Ascending aorta (tissue), 2 donors: ENCODE measurements at regions of chr19 and their contacts with region 1.

Region 1: DNA sequence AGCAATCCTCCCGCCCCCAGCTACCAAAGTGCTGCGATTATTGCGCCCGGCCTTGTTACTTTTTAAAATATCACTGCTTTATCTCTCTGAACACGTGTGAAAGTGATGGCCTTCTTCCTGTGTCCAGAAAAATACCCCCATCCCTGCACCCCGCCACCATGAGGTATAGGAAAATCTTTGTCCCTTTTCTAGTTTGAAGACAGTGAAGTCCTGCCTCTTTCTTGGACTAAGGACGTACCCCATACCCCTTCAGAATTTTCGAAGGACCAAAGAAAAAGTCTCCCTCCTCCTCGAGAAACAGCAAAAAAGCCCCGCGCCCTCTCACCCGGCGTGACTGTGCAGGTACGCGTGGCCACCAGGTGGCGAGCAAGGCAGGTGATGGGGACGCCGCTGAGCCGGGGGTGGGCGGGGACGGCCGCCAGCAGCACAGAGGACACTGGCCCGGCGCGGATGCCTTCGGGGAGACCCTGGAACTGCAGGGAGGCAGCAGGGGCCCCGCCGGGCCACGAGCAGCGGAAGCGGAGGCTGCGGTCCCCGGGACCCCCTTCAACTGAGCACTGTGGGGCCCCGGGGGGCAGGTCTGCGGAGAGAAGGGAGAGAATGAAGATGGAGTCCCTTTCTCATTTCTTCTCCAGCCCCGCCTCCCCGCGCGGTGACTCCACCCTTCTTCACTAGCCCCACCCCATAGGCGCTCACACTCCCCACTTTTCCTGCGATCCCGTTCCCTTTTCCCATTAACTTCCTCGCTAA is 3.2 kb downstream of the VSIG10L start:
- DNase-seq: peak; percentile 47 to 92
- H3K4me3 ChIP-seq: peak overlapping the region; percentile 57 to 85
- H3K27ac ChIP-seq: peak overlapping the region; percentile 92 to 93
- H3K4me1 ChIP-seq: peaks cover 0 to 4% of the 10 kb centered on the region in 2 donors
- H3K27me3 ChIP-seq: no peaks in the 10 kb centered on the region
- CTCF ChIP-seq: peak; percentile 83 to 97 (median 90)

Region 2: GRCh38 chr19:51108066-51108804 is 230.5 kb before region 1 on chr19 and contains the start of gene CTU1:
- intact Hi-C with region 1: loop called (anchors 2 kb)
- DNase-seq: peak; percentile 98 to 100
- H3K4me3 ChIP-seq: peak within 1 kb of the TSS; percentile 69 to 74
- H3K27ac ChIP-seq: peak within 1 kb of the TSS; percentile 37 to 45
- H3K4me1 ChIP-seq: peaks cover 6 to 9% of the 10 kb centered on the region in 2 donors
- H3K27me3 ChIP-seq: no peaks in the 10 kb centered on the region
- CTCF ChIP-seq: peak in 1 of 3 experiments; percentile 50
- total RNA-seq, gene CTU1: 8.9 TPM

Region 3: DNA sequence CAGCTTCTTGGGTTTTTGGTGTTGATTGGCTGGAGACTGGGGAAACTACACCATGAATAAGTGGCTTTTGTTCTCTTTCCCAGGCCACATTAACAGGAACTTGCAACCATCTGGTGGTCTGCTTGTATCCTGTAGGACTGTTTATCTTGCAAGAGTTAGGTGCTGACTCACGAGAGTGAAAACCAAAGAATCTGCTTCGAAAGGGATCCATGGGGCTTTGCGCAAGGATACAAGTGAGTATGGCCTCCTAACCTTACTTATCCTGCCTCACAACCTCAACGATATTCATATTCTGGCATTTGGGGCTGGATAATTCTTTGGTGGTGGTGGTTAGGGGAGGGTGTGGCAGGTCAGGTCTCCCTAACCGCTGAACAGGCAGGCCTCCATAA is 92.6 kb before region 1 on chr19:
- intact Hi-C with region 1: no loop called
- DNase-seq: no peak
- H3K4me3 ChIP-seq: no peak overlapping the region
- H3K27ac ChIP-seq: no peak overlapping the region
- H3K4me1 ChIP-seq: no peaks in the 10 kb centered on the region
- H3K27me3 ChIP-seq: no peaks in the 10 kb centered on the region
- CTCF ChIP-seq: no peak

Region 4: GRCh38 chr19:51393959-51394836 is 55.5 kb after region 1 on chr19:
- intact Hi-C with region 1: loop called (anchors 1 kb)
- DNase-seq: peak; percentile 92 to 98
- H3K4me3 ChIP-seq: peak overlapping the region; percentile 43 to 63
- H3K27ac ChIP-seq: peak overlapping the region; percentile 74
- H3K4me1 ChIP-seq: peaks cover 3 to 8% of the 10 kb centered on the region in 2 donors
- H3K27me3 ChIP-seq: no peaks in the 10 kb centered on the region
- CTCF ChIP-seq: peak in 1 of 3 experiments; percentile 5

Region 5: DNA sequence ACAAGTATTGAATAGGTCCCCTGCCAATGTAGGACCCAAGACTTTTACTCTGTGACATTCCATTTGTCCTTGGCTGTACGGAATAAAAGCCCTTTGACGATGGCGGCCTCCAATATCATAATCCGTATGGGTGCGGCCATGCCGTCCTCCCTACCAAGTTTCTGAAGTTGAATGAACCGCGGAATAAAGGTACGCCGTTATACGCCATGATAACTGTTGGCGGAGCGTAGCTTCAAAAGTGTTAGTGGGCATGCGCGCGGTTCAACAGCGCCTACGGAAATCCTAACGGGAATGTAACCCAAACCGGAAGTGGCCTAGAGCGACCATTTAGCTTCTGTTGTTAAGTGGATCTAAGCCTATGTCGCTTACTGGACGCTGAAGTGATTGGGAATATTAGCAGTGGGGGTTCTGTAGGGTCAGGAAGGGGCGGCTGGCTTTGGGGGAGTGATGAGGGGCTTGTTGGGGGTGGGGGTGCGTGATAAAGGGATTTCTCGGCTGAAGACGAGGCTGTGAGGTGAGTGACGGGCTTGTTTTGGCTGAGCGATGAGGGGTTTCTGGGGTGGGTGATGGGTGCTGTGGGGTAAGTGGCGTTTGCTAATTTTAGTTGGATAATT is 232.3 kb after region 1 on chr19 and contains the start of gene ZNF175:
- intact Hi-C with region 1: loop called (anchors 2 kb)
- DNase-seq: peak; percentile 74 to 97
- H3K4me3 ChIP-seq: peak within 1 kb of the TSS; percentile 56 to 94
- H3K27ac ChIP-seq: peak within 1 kb of the TSS; percentile 49 to 72
- H3K4me1 ChIP-seq: peaks cover 0 to 12% of the 10 kb centered on the region in 2 donors
- H3K27me3 ChIP-seq: no peaks in the 10 kb centered on the region
- CTCF ChIP-seq: no peak
- total RNA-seq, gene ZNF175: 6.1 TPM

Region 6: GRCh38 chr19:51660975-51661600 is 322.4 kb after region 1 on chr19:
- intact Hi-C with region 1: loop called (anchors 1 kb)
- DNase-seq: no peak
- H3K4me3 ChIP-seq: no peak overlapping the region
- H3K27ac ChIP-seq: no peak overlapping the region
- H3K4me1 ChIP-seq: peaks cover 0 to 2% of the 10 kb centered on the region in 2 donors
- H3K27me3 ChIP-seq: no peaks in the 10 kb centered on the region
- CTCF ChIP-seq: peak; percentile 13 to 54 (median 45)

Region 7: DNA sequence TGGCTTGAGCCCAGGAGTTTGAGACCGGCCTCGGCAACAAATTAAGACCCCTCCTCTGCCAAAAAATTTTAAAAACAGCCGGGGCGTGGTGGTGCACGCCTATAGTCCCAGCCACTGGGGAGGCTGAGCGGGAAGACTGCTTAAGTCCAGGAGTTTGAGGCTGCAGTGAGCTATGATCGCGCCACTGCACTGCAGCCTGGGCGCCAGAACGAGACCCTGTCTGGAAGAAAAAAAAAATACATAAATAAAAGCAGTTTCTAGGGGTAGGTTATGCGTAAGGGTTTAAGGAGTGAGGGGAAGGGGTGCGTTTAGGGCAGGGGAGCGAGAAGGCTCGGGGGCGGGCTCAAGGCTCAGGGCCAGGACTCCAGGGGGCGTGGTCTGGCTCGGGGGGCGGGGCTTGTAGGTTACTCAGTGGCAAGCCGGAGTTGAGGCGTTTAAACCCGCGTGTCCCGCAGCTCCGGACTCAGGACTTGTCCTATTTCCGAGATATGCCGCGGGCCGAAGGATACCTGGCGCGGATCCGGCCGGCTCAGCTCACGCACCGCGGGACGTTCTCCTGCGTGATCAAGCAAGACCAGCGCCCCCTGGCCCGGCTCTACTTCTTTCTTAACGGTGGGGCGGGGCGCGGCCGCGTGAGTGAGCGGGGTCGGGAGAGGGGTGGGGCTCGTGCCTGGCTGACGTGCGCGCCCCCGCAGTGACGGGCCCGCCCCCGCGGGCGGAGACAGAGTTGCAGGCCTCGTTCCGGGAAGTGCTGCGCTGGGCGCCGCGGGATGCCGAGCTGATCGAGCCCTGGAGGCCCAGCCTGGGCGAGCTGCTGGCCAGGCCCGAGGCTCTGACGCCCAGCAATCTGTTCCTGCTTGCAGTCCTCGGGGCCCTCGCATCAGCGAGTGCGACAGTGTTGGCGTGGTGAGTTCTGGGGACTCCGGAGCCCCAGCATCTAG is 365.1 kb after region 1 on chr19:
- intact Hi-C with region 1: loop called (anchors 1 kb)
- DNase-seq: peak; percentile 90 to 99
- H3K4me3 ChIP-seq: peak overlapping the region; percentile 60 to 76
- H3K27ac ChIP-seq: peak overlapping the region; percentile 80 to 93
- H3K4me1 ChIP-seq: peaks cover 9 to 17% of the 10 kb centered on the region in 2 donors
- H3K27me3 ChIP-seq: no peaks in the 10 kb centered on the region
- CTCF ChIP-seq: peak; percentile 32 to 54 (median 44)